ENCODE measurements at regions of chr21 and their contacts with region 1.

Region 1: GRCh38 chr21:25421327-25422028 is 185.8 kb downstream of the MRPL39 start:
- DNase-seq: peak; percentile 86
- H3K4me3 Mint-ChIP-seq: peak overlapping the region; percentile 59
- H3K27ac Mint-ChIP-seq: peak overlapping the region; percentile 92
- H3K4me1 Mint-ChIP-seq: peaks cover 65% of the 10 kb centered on the region
- H3K27me3 Mint-ChIP-seq: no peaks in the 10 kb centered on the region

Region 2: GRCh38 chr21:25161571-25161970 is 259.9 kb before region 1 on chr21:
- CTCF ChIA-PET with region 1: no interaction called
- intact Hi-C with region 1: no loop called
- DNase-seq: no peak
- H3K4me3 Mint-ChIP-seq: no peak overlapping the region
- H3K27ac Mint-ChIP-seq: no peak overlapping the region
- H3K4me1 Mint-ChIP-seq: no peaks in the 10 kb centered on the region
- H3K27me3 Mint-ChIP-seq: no peaks in the 10 kb centered on the region

Region 3: GRCh38 chr21:25487046-25487594 is 65.6 kb after region 1 on chr21:
- CTCF ChIA-PET with region 1: interaction called, 9 read pairs
- intact Hi-C with region 1: loop called (anchors 1 kb)
- DNase-seq: no peak
- H3K4me3 Mint-ChIP-seq: peak overlapping the region; percentile 14
- H3K27ac Mint-ChIP-seq: peak overlapping the region; percentile 74
- H3K4me1 Mint-ChIP-seq: peaks cover 65% of the 10 kb centered on the region
- H3K27me3 Mint-ChIP-seq: no peaks in the 10 kb centered on the region

Region 4: DNA sequence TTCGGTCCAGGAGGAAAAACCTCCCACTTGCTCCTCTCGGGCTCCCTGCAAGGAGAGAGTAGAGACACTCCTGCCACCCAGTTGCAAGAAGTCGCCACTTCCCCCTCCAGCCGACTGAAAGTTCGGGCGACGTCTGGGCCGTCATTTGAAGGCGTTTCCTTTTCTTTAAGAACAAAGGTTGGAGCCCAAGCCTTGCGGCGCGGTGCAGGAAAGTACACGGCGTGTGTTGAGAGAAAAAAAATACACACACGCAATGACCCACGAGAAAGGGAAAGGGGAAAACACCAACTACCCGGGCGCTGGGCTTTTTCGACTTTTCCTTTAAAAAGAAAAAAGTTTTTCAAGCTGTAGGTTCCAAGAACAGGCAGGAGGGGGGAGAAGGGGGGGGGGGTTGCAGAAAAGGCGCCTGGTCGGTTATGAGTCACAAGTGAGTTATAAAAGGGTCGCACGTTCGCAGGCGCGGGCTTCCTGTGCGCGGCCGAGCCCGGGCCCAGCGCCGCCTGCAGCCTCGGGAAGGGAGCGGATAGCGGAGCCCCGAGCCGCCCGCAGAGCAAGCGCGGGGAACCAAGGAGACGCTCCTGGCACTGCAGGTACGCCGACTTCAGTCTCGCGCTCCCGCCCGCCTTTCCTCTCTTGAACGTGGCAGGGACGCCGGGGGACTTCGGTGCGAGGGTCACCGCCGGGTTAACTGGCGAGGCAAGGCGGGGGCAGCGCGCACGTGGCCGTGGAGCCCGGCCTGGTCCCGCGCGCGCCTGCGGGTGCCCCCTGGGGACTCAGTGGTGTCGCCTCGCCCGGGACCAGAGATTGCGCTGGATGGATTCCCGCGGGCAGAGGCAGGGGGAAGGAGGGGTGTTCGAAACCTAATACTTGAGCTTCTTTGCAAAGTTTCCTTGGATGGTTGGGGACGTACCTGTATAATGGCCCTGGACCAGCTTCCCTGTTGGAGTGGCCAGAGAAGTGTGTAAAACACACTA is 140.5 kb after region 1 on chr21:
- CTCF ChIA-PET with region 1: interaction called, 9 read pairs
- intact Hi-C with region 1: loop called (anchors 1 kb)
- DNase-seq: peak; percentile 81
- H3K4me3 Mint-ChIP-seq: peak overlapping the region; percentile 91
- H3K27ac Mint-ChIP-seq: peak overlapping the region; percentile 96
- H3K4me1 Mint-ChIP-seq: peaks cover 45% of the 10 kb centered on the region
- H3K27me3 Mint-ChIP-seq: no peaks in the 10 kb centered on the region

Region 5: DNA sequence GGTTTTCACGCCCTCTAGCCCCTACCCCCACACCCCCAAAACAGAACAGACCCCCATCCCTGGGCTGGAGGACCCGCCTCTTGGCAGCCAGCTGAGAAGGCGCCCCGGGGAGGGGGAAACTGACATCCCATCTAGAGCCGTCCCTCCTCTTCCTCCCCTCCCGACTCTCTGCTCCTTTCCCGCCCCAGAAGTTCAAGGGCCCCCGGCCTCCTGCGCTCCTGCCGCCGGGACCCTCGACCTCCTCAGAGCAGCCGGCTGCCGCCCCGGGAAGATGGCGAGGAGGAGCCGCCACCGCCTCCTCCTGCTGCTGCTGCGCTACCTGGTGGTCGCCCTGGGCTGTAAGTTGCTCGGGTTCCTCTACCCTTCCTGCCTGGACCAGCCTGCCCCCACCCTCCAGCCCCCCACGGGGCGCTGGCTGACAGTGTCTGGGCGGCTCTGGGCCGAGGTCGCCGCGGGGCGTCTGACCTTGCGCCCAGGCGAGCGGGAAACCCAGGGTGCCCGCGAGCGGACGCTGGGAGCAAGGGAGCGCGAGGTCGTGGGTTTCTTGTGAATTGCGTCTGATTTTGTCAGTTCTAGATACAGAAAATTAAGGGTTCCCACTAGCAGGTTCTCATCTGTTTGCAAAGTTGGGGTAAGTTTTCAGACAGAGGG is 218.2 kb after region 1 on chr21:
- CTCF ChIA-PET with region 1: no interaction called
- intact Hi-C with region 1: loop called (anchors 1 kb)
- DNase-seq: peak; percentile 57
- H3K4me3 Mint-ChIP-seq: peak overlapping the region; percentile 67
- H3K27ac Mint-ChIP-seq: no peak overlapping the region
- H3K4me1 Mint-ChIP-seq: peaks cover 20% of the 10 kb centered on the region
- H3K27me3 Mint-ChIP-seq: peaks cover 31% of the 10 kb centered on the region

Region 6: GRCh38 chr21:25801217-25802014 is 379.9 kb after region 1 on chr21:
- CTCF ChIA-PET with region 1: no interaction called
- intact Hi-C with region 1: loop called (anchors 1 kb)
- DNase-seq: peak; percentile 95
- H3K4me3 Mint-ChIP-seq: peak overlapping the region; percentile 23
- H3K27ac Mint-ChIP-seq: no peak overlapping the region
- H3K4me1 Mint-ChIP-seq: peaks cover 6% of the 10 kb centered on the region
- H3K27me3 Mint-ChIP-seq: peaks cover 8% of the 10 kb centered on the region

Measured in activated naive CD4-positive, alpha-beta T cell treated with anti-CD3 and anti-CD28 coated beads for 36 hours (primary cell).